IMR-90 (cell line): ENCODE measurements at regions of chr19 and their contacts with region 1.

Region 1: GRCh38 chr19:30853036-30853435 is 480.9 kb downstream of the ZNF536 start:
- DNase-seq: no peak
- ATAC-seq: no peak
- H3K4me3 ChIP-seq: no peak overlapping the region
- H3K27ac ChIP-seq: no peak overlapping the region
- H3K4me1 ChIP-seq: no peaks in the 10 kb centered on the region
- H3K27me3 ChIP-seq: no peaks in the 10 kb centered on the region
- CTCF ChIP-seq: no peak
- POLR2A ChIP-seq: no peak
- RAD21 ChIP-seq: no peak

Region 2: DNA sequence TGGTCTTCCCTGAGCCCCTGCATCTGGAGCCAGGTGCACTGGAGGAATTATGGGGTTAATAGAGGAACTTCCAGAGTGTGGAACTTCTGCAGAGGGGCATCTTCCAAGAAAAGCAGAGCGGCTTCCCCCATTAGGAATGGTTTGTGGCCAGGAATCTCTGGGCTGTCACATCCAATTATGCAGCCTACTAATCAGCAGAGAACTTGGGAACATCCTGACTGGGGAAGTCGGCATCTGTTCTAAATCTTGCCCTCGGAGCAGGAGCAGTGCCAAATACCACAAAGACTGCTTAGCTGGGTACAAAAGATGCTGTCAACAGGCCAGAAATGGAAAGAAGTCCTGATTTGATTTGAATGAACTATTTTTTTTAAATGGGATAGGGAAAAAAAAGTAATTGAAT is 45.8 kb before region 1 on chr19:
- CTCF ChIA-PET with region 1: no interaction called
- POLR2A ChIA-PET with region 1: no interaction called
- dilution Hi-C with region 1: no loop called
- in situ Hi-C with region 1: no loop called
- intact Hi-C with region 1: loop called (anchors 1 kb)
- DNase-seq: no peak
- ATAC-seq: no peak
- H3K4me3 ChIP-seq: no peak overlapping the region
- H3K27ac ChIP-seq: no peak overlapping the region
- H3K4me1 ChIP-seq: no peaks in the 10 kb centered on the region
- H3K27me3 ChIP-seq: no peaks in the 10 kb centered on the region
- CTCF ChIP-seq: no peak
- POLR2A ChIP-seq: no peak
- RAD21 ChIP-seq: no peak